Body of pancreas (tissue), 4 donors: ENCODE measurements at regions of chr11 and their contacts with region 1.

Region 1: GRCh38 chr11:69645295-69645694 is 4.3 kb downstream of the CCND1 start:
- DNase-seq: no peak
- ATAC-seq: no peak
- H3K4me3 ChIP-seq: no peak overlapping the region
- H3K27ac ChIP-seq: peak overlapping the region in 3 of 4 donors; percentile 51 to 79 (median 57)
- H3K4me1 ChIP-seq: peaks cover 56% of the 10 kb centered on the region
- H3K27me3 ChIP-seq: peaks cover 0 to 4% of the 10 kb centered on the region in 2 donors
- CTCF ChIP-seq: peak in 1 of 7 experiments; percentile 8
- POLR2A ChIP-seq: no peak

Region 2: DNA sequence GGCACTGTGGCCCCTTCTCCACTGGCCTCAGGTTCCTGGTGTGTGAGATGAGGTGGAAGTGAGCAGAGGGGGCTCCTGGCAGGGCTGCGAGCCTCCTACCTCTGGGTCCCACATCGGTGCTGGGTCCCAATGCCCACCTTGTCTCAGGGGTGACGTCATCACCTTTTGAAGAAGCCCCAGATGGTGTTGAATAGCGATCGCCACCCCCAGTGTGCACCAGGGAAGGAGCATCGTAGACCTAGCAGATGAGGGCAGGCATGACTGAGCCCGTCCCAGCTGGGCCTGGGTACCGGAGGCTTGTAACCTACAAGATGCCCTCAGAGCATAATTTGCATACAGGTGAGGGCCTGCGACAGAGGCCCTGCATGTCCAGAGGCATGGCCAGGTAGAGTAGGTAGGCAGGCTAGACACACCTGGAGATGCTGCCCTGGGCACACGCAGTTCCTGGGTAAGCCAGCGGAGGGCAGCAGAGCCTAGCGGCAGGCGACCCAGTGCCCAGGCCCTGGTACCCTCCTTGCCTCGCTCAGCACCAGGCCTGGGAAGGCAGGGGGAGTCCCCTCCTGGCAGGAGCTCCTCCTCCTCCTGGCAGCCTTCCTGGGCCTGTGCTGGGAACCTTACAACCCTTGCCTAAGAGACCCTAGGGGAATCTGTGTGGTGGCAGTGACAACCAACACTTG is 544.0 kb before region 1 on chr11:
- intact Hi-C with region 1: loop called (anchors 5 kb)
- DNase-seq: peak; percentile 83 to 90 (median 87)
- ATAC-seq: peak; percentile 92
- H3K4me3 ChIP-seq: no peak overlapping the region
- H3K27ac ChIP-seq: no peak overlapping the region
- H3K4me1 ChIP-seq: peaks cover 9% of the 10 kb centered on the region
- H3K27me3 ChIP-seq: no peaks in the 10 kb centered on the region
- CTCF ChIP-seq: peak; percentile 98 to 100 (median 99)
- POLR2A ChIP-seq: no peak

Region 3: GRCh38 chr11:69744435-69744834 is 99.1 kb after region 1 on chr11:
- intact Hi-C with region 1: no loop called
- DNase-seq: peak in 1 of 4 donors; percentile 16
- ATAC-seq: no peak
- H3K4me3 ChIP-seq: no peak overlapping the region
- H3K27ac ChIP-seq: no peak overlapping the region
- H3K4me1 ChIP-seq: no peaks in the 10 kb centered on the region
- H3K27me3 ChIP-seq: no peaks in the 10 kb centered on the region
- CTCF ChIP-seq: no peak
- POLR2A ChIP-seq: no peak